ENCODE measurements at regions of chr6 and their contacts with region 1.

Region 1: DNA sequence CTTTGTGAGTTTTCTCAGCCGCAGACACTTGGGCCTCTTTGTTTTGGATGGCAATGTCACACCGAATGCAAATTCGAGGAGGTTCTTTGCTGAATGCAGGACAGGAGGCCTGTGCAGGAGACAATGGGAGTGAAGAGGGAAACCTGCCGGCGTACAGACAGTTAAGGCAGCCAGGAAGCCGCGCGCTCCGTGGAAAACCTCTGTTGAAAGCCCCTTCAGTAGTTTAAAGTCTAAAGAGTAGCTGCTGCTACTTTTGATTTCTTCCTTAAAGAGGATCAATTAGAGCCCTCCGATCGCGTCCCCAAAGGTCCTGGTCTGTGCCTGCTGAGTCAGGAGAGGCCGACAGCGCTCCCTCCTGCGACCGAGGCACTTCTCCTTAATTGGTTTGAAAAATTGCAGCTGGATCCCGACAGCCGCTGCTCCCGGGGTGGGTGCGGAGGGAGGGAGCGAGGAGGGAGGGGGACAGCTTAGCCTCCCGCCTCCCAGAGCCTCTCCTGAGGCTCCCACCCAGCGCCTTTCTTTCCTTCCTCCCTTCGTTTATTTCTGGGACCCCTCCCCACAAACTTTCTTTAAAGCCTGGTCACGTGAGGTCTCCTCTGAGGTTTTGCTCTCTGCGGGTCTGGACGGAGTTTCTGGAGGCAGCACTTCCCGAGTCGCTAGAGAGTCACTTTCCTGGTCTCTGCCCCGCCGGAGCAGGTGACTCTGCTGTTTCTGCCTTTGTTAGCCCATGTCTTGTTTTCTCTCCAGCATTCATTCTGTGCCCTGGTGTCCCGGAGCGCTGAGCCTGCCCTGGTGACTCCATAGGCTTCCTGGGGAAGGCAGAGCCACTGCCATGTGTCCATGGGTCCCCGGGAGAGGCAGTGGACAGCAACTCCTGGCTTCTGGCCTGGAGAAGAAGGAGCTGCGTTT is 22.3 kb upstream of the RPP40 start:
- DNase-seq: peak; percentile 61 to 64
- ATAC-seq: peak; percentile 78 to 89 (median 84)
- H3K4me3 ChIP-seq: peak overlapping the region in 9 of 10 donors; percentile 35 to 72 (median 65)
- H3K27ac ChIP-seq: peak overlapping the region in 8 of 10 donors; percentile 51 to 79 (median 68)
- H3K4me1 ChIP-seq: peaks cover 0 to 24% (median 5%) of the 10 kb centered on the region in 9 donors
- H3K27me3 ChIP-seq: no peaks in the 10 kb centered on the region
- CTCF ChIP-seq: peak in 3 of 9 donors; percentile 38 to 42 (median 41)

Region 2: GRCh38 chr6:4853782-4854511 is 172.2 kb before region 1 on chr6:
- intact Hi-C with region 1: loop called in 1 of 10 experiments (anchors 10 kb)
- DNase-seq: no peak
- ATAC-seq: no peak
- H3K4me3 ChIP-seq: no peak overlapping the region
- H3K27ac ChIP-seq: no peak overlapping the region
- H3K4me1 ChIP-seq: peaks cover 0 to 15% (median 11%) of the 10 kb centered on the region in 9 donors
- H3K27me3 ChIP-seq: no peaks in the 10 kb centered on the region
- CTCF ChIP-seq: no peak

Measured in heart right ventricle (tissue), 16 donors.